Activated CD4-positive, alpha-beta T cell treated with anti-CD3 and anti-CD28 coated beads, Interleukin-2, amount 10 ng/mL, durations not matched to agents 7 days and 5 days (primary cell): ENCODE measurements at regions of chr2 and their contacts with region 1.

Region 1: DNA sequence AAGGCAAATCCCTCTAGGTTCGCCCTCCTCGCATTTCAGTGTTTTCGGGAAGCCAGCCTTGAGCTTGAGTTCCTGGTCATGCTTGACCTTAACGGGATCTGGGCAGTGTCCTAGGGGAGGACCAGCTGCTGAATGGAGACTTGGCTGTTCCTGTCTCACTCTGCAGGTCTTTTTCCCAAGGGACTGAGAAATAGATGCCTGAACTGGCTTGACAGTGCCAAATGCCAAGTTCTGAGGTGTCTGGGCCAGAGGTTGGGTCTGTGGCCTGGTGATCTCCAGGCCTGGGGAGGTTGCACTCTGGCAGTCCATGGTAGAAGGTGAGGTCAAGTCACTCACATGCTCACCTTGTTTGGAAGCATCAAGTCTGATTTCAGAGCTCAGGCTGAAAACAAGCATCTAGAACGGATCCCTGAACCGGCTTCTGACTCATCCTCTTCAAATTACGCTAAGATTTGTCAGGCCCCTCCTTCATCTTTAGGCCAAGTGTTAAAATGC is 19.6 kb downstream of the RHOB start:
- DNase-seq: no peak
- H3K4me3 Mint-ChIP-seq: no peak overlapping the region
- H3K27ac Mint-ChIP-seq: no peak overlapping the region
- H3K4me1 Mint-ChIP-seq: no peaks in the 10 kb centered on the region
- H3K27me3 Mint-ChIP-seq: peaks cover 19% of the 10 kb centered on the region

Region 2: DNA sequence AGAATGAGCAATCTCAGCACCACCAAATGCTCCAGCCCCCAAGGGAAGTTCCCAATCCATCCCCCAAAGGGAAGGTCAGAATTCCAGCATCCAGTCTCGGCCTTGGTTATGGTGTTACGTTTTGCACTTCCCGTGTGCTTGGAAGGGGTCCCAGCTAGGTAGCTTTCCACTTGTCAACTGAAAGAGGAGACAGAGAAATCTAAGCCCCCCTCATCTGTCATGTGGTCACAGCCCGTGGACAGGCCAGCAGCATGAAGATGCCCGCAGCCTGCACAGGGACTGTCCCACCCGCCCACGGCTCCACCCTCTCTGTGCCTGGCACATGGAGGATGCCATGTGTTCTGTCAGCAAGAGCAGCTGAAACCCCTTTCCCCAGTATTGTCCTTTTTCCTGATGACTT is 12.5 kb after region 1 on chr2:
- CTCF ChIA-PET with region 1: interaction called, 16 read pairs
- POLR2A ChIA-PET with region 1: no interaction called
- DNase-seq: no peak
- H3K4me3 Mint-ChIP-seq: no peak overlapping the region
- H3K27ac Mint-ChIP-seq: no peak overlapping the region
- H3K4me1 Mint-ChIP-seq: no peaks in the 10 kb centered on the region
- H3K27me3 Mint-ChIP-seq: peaks cover 2% of the 10 kb centered on the region